RWPE1 (cell line): ENCODE measurements at regions of chr1 and their contacts with region 1.

Region 1: DNA sequence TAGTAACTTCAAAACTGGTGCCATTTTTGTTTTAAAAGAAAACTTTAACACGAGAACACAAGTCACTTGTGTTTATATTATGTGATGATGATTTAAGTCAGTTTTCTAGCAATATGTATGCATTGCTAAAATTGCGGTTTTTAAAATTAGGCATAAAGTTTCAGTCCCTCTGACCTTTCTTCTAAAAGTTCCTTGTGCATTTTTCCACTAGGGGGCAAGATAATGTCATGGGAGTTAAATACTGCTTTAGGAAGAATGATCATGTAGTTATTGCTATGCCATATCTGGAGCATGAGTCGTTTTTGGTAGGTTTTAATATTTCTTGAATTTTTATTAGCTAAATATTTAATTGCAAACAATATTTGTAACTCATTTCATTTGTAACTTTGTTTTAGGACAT is 10.7 kb downstream of the CDC7 start:
- DNase-seq: peak; percentile 13
- H3K27ac ChIP-seq: no peak overlapping the region
- CTCF ChIP-seq: peak; percentile 75

Region 2: GRCh38 chr1:91500756-91501522 is 10.4 kb before region 1 on chr1 and contains the start of gene CDC7:
- CTCF ChIA-PET with region 1: interaction called, 15 read pairs
- POLR2A ChIA-PET with region 1: no interaction called
- DNase-seq: peak; percentile 93
- H3K27ac ChIP-seq: peak within 1 kb of the TSS; percentile 99
- CTCF ChIP-seq: peak; percentile 47